Caco-2 (cell line): ENCODE measurements at regions of chr9 and their contacts with region 1.

Region 1: GRCh38 chr9:113340017-113340699 is at the start of gene WDR31:
- DNase-seq: peak; percentile 88 to 91
- H3K4me3 ChIP-seq: peak within 1 kb of the TSS; percentile 75
- H3K4me3 Mint-ChIP-seq: peak within 1 kb of the TSS; percentile 74
- H3K27ac Mint-ChIP-seq: peak within 1 kb of the TSS; percentile 85
- H3K4me1 ChIP-seq: no peaks in the 10 kb centered on the region
- H3K4me1 Mint-ChIP-seq: peaks cover 9% of the 10 kb centered on the region
- H3K27me3 ChIP-seq: no peaks in the 10 kb centered on the region
- H3K27me3 Mint-ChIP-seq: no peaks in the 10 kb centered on the region
- CTCF ChIP-seq: no peak
- total RNA-seq, gene WDR31: 1.9 and 2.3 TPM in 2 replicates

Region 2: GRCh38 chr9:113309204-113309813 is 30.8 kb before region 1 on chr9:
- CTCF ChIA-PET with region 1: no interaction called
- POLR2A ChIA-PET with region 1: no interaction called
- intact Hi-C with region 1: loop called (anchors 2 kb)
- DNase-seq: peak in 1 of 2 experiments; percentile 43
- H3K4me3 ChIP-seq: no peak overlapping the region
- H3K4me3 Mint-ChIP-seq: no peak overlapping the region
- H3K27ac Mint-ChIP-seq: no peak overlapping the region
- H3K4me1 ChIP-seq: no peaks in the 10 kb centered on the region
- H3K4me1 Mint-ChIP-seq: no peaks in the 10 kb centered on the region
- H3K27me3 ChIP-seq: no peaks in the 10 kb centered on the region
- H3K27me3 Mint-ChIP-seq: no peaks in the 10 kb centered on the region
- CTCF ChIP-seq: peak; percentile 66 to 84

Region 3: DNA sequence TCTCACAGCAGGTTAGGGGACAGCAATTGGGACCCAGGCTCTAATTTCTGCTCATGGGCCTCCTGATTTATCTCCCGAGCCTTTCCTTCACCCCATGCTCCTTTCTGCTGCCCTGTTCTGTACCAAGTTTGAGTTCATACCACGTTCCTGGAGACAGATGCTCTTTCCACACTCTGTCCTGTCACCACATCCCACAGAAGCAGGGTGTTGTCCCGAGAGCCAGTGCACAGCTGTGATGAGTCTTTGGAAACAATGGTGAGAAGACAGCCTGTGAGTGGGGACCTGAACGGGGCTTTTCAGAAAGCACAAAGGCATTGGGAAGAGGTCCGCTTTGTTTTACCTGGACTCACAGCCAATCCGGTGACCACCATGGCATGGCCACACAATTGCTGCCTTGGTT is 17.5 kb before region 1 on chr9:
- CTCF ChIA-PET with region 1: no interaction called
- POLR2A ChIA-PET with region 1: no interaction called
- intact Hi-C with region 1: no loop called
- DNase-seq: no peak
- H3K4me3 ChIP-seq: no peak overlapping the region
- H3K4me3 Mint-ChIP-seq: no peak overlapping the region
- H3K27ac Mint-ChIP-seq: no peak overlapping the region
- H3K4me1 ChIP-seq: no peaks in the 10 kb centered on the region
- H3K4me1 Mint-ChIP-seq: no peaks in the 10 kb centered on the region
- H3K27me3 ChIP-seq: no peaks in the 10 kb centered on the region
- H3K27me3 Mint-ChIP-seq: no peaks in the 10 kb centered on the region
- CTCF ChIP-seq: no peak